Vagina (tissue), 2 donors: ENCODE measurements at regions of chr6 and their contacts with region 1.

Region 1: DNA sequence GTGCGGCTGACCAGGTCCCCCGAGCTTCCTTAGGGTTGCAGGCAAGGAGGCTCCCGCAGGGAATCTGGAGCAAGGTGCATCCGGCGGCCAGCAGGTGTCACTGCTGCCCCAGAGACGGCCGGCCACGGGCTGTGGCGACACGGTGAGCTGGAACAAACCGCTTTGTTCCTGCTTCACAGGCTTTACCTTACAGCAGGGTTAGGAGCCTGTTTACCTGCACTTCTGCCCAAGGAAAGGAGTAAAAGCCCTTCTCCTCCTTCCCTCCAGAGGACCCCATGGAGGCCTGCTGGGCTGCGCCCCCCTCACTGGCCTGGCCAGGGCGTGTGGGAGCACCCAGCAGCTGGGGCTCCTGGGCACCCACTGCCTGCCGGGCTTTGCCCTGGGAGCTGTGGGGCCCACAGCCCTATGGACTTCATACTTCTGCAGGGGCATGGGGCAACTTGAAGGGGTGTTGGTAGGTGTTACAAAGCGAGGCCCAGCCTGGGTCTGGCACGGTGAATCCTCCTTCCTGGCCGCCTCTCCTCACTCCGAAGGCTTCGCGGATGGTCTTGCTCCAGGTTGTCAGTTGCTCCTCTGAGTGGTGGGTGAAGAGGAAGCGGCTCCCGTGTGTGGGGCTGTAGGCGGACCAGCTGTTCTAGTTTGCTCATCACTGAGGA is 88.4 kb downstream of the CDC5L start:
- DNase-seq: no peak
- H3K4me3 ChIP-seq: no peak overlapping the region
- H3K27ac ChIP-seq: no peak overlapping the region
- H3K4me1 ChIP-seq: peaks cover 4% of the 10 kb centered on the region
- H3K27me3 ChIP-seq: no peaks in the 10 kb centered on the region
- CTCF ChIP-seq: peak; percentile 78 to 87 (median 84)
- POLR2A ChIP-seq: no peak

Region 2: DNA sequence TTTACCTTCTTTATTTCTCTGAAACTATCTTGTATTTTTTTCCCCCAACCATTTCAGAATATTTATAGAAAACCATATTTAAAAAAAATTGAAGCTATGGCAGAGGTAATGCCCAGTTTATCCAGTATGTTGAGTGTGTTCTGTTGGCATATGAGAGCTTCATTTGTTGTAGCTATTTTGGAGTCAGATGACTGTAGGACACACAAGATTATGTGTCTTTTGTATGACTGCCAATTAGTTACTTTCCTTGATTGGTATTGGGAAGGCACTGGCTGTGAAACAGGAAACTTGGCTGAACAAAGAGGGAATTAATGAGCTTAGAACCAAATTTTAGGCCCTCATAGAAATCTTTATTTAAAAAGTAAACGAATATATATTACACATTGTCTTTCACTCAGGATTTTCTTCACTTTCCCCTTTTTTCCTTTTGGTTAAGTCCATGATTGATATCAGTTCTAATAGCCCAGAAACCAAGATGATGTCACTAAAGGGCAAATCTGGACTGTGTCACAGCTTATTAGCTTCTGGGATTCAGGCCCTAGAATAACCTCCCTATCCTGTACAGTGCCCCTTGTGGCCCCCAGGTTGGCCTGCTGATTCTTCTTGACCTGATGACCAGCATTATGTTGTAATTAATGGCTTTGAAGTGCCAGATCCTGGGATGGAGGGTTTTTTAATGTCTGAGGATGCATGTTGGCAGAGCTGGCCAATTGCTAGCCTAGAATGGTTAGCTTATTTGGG is 78.3 kb before region 1 on chr6:
- intact Hi-C with region 1: no loop called
- DNase-seq: no peak
- H3K4me3 ChIP-seq: no peak overlapping the region
- H3K27ac ChIP-seq: no peak overlapping the region
- H3K4me1 ChIP-seq: peaks cover 13% of the 10 kb centered on the region
- H3K27me3 ChIP-seq: no peaks in the 10 kb centered on the region
- CTCF ChIP-seq: no peak
- POLR2A ChIP-seq: no peak

Region 3: GRCh38 chr6:45714741-45715507 is 1239.0 kb after region 1 on chr6:
- intact Hi-C with region 1: loop called (anchors 10 kb)
- DNase-seq: peak in 1 of 2 donors; percentile 79
- H3K4me3 ChIP-seq: no peak overlapping the region
- H3K27ac ChIP-seq: no peak overlapping the region
- H3K4me1 ChIP-seq: no peaks in the 10 kb centered on the region
- H3K27me3 ChIP-seq: no peaks in the 10 kb centered on the region
- CTCF ChIP-seq: peak; percentile 56 to 81 (median 71)
- POLR2A ChIP-seq: no peak